ENCODE measurements at regions of chr3 and their contacts with region 1.

Region 1: GRCh38 chr3:128969993-128970739 is 23.7 kb downstream of the CFAP92 start:
- DNase-seq: peak; percentile 85
- H3K4me3 ChIP-seq: no peak overlapping the region
- H3K27ac ChIP-seq: no peak overlapping the region
- H3K4me1 ChIP-seq: peaks cover 7 to 34% (median 17%) of the 10 kb centered on the region in 6 donors
- H3K27me3 ChIP-seq: no peaks in the 10 kb centered on the region
- CTCF ChIP-seq: peak; percentile 68 to 93 (median 84)
- POLR2A ChIP-seq: no peak

Region 2: GRCh38 chr3:129034648-129035047 is 64.5 kb after region 1 on chr3:
- intact Hi-C with region 1: no loop called
- DNase-seq: no peak
- H3K4me3 ChIP-seq: no peak overlapping the region
- H3K27ac ChIP-seq: peak overlapping the region in 6 of 8 donors; percentile 16 to 83 (median 77)
- H3K4me1 ChIP-seq: peaks cover 7 to 54% (median 27%) of the 10 kb centered on the region in 6 donors
- H3K27me3 ChIP-seq: peaks cover 0 to 17% (median 0%) of the 10 kb centered on the region in 7 donors
- CTCF ChIP-seq: no peak
- POLR2A ChIP-seq: no peak

Region 3: GRCh38 chr3:129249276-129250065 is 279.3 kb after region 1 on chr3 and contains the start of gene COPG1:
- intact Hi-C with region 1: loop called (anchors 5 kb)
- DNase-seq: peak; percentile 95
- H3K4me3 ChIP-seq: peak within 1 kb of the TSS; percentile 81 to 98 (median 90)
- H3K27ac ChIP-seq: peak within 1 kb of the TSS; percentile 84 to 94 (median 89)
- H3K4me1 ChIP-seq: peaks cover 10 to 76% (median 51%) of the 10 kb centered on the region in 6 donors
- H3K27me3 ChIP-seq: no peaks in the 10 kb centered on the region
- CTCF ChIP-seq: peak in 2 of 11 experiments; percentile 9 to 27
- POLR2A ChIP-seq: peak; percentile 10 to 90 (median 71)
- total RNA-seq, gene COPG1: 90.8 to 134 (median 116) TPM